Mammary epithelial cell (primary cell): ENCODE measurements at regions of chr12 and their contacts with region 1.

Region 1: GRCh38 chr12:38053655-38054464 is 262.7 kb upstream of the ALG10B start:
- DNase-seq: peak; percentile 49
- H3K4me3 ChIP-seq: no peak overlapping the region
- H3K27ac ChIP-seq: no peak overlapping the region
- H3K4me1 ChIP-seq: no peaks in the 10 kb centered on the region
- H3K27me3 ChIP-seq: no peaks in the 10 kb centered on the region
- CTCF ChIP-seq: no peak

Region 2: GRCh38 chr12:38138225-38139221 is 84.7 kb after region 1 on chr12:
- CTCF ChIA-PET with region 1: interaction called, 5 read pairs
- dilution Hi-C with region 1: no loop called
- in situ Hi-C with region 1: no loop called
- intact Hi-C with region 1: loop called (anchors 1 kb)
- DNase-seq: peak; percentile 64
- H3K4me3 ChIP-seq: peak overlapping the region; percentile 61 to 87 (median 78)
- H3K27ac ChIP-seq: peak overlapping the region; percentile 52
- H3K4me1 ChIP-seq: no peaks in the 10 kb centered on the region
- H3K27me3 ChIP-seq: no peaks in the 10 kb centered on the region
- CTCF ChIP-seq: peak; percentile 89 to 98

Region 3: GRCh38 chr12:38664661-38665269 is 610.9 kb after region 1 on chr12:
- CTCF ChIA-PET with region 1: no interaction called
- dilution Hi-C with region 1: no loop called
- in situ Hi-C with region 1: no loop called
- intact Hi-C with region 1: loop called (anchors 10 kb)
- DNase-seq: peak; percentile 24
- H3K4me3 ChIP-seq: no peak overlapping the region
- H3K27ac ChIP-seq: no peak overlapping the region
- H3K4me1 ChIP-seq: no peaks in the 10 kb centered on the region
- H3K27me3 ChIP-seq: no peaks in the 10 kb centered on the region
- CTCF ChIP-seq: peak; percentile 63 to 73

Region 4: DNA sequence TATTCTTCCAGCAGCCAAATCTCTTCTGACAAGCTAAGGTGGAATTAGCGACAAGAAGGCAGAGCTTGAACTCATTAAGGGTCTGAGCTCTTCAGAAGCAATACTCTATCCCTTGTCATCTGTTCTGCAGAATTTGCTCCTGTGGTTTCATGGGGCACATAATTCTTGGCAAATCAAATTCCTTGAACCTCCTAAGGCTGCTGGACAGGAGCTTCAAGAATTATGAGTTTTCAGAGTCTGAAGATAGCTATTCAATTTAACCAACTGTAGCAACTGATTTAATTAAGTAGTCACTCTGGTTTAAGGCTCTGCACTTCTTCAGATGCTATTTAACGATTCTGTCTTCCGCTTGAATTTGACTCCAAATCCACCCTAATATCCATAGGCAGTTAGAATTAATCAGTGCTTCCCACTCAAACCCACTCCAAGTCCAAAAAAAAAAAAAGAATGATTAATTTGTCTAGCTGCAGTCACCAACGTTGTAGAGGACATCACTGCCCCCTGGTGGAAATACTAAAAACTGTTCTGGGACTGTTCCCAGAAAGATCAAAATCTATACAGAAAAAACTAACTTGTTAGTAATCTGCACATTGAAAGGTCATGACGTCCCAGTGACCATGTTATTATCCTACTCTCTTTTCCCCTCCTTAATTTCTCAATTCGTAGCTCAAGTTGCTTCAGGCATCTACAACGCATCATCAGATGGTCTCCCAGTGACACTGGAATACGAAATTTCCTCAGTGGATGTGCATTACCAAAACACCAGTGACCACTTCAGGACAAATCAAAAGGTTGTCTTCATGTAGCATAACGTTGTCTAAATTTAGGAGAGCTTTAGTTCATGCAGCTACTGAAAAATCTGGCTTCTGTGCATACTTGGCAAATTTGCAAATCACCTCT is 1219.3 kb after region 1 on chr12:
- CTCF ChIA-PET with region 1: no interaction called
- dilution Hi-C with region 1: no loop called
- in situ Hi-C with region 1: no loop called
- intact Hi-C with region 1: loop called (anchors 10 kb)
- DNase-seq: peak; percentile 35
- H3K4me3 ChIP-seq: no peak overlapping the region
- H3K27ac ChIP-seq: no peak overlapping the region
- H3K4me1 ChIP-seq: no peaks in the 10 kb centered on the region
- H3K27me3 ChIP-seq: no peaks in the 10 kb centered on the region
- CTCF ChIP-seq: peak; percentile 58 to 70